ENCODE measurements at regions of chr12 and their contacts with region 1.

Region 1: DNA sequence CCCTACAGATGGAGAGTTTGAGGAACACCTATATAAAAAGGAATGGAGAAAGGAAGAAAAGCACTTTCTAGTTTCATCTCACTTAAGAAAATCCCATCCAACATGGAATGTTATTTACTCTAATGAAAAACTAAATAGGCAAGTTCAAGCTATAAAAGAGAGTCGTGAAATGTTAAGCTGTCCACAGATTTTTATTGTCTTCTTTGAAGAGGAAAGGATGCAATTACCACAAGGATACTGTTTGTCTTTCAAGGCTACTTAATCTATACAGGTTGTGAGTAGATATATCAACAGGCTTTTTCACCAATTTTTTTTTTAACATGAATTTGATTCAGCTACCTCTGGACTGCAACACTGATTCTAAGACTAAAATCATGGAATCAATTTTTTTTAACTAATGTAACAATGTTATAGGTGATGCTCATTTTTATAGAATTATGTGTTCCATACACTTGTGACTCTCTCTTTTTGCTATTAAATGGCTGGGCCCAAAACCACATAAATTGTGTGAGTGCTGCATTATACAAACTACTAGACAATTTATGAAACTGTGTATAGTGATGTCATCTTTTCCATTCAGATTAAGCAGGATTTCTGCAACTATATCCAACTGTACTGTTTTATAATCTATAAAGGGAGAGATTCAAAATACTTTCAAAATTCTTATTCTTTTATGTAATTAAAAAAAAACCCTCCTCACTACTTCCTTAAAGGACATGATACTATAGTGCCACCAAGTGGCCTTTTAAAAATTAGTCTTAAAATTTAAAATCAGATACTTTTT is 26.8 kb upstream of the BMAL2 start:
- DNase-seq: peak in 1 of 4 donors; percentile 44
- ATAC-seq: peak; percentile 44
- H3K4me3 ChIP-seq: no peak overlapping the region
- H3K27ac ChIP-seq: no peak overlapping the region
- H3K4me1 ChIP-seq: no peaks in the 10 kb centered on the region
- H3K27me3 ChIP-seq: no peaks in the 10 kb centered on the region
- CTCF ChIP-seq: peak in 1 of 2 donors; percentile 65

Region 2: DNA sequence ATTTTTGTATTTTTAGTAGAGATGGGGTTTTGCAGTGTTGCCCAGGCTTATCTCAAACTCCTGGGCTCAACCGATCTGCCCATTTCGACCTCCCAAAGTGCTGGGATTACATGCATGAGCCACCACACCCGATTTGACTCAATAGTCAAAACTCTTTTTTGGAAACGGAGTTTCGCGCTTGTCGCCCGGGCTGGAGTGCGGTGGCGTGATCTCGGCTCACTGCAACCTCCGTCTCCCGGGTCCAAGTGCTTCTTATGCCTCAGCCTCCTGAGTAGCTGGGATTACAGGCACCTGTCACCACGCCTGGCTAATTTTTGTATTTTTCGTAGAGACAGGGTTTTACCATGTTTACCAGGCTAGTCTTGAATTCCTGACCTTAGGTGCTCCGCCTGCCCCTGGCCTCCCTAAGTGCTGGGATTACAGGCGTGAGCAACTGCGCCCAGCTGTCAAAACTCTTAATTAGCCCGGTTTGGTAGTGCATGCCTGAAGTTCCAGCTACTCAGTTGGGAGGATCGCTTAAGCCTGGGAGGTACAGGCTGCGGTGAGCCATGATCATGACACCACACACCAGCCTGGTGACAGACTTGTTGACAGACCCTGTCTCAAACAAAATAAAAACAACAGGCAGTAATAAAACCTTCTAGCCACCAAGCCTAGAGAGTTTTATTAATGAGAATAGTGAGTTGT is 271.1 kb before region 1 on chr12:
- intact Hi-C with region 1: loop called in 1 of 2 experiments (anchors 10 kb)
- DNase-seq: no peak
- ATAC-seq: no peak
- H3K4me3 ChIP-seq: no peak overlapping the region
- H3K27ac ChIP-seq: no peak overlapping the region
- H3K4me1 ChIP-seq: no peaks in the 10 kb centered on the region
- H3K27me3 ChIP-seq: no peaks in the 10 kb centered on the region
- CTCF ChIP-seq: no peak

Region 3: GRCh38 chr12:27260746-27261145 is 45.1 kb before region 1 on chr12:
- intact Hi-C with region 1: no loop called
- DNase-seq: no peak
- ATAC-seq: peak; percentile 54
- H3K4me3 ChIP-seq: no peak overlapping the region
- H3K27ac ChIP-seq: peak overlapping the region; percentile 46 to 57
- H3K4me1 ChIP-seq: peaks cover 7 to 25% of the 10 kb centered on the region in 2 donors
- H3K27me3 ChIP-seq: no peaks in the 10 kb centered on the region
- CTCF ChIP-seq: no peak